PC-9 (cell line): ENCODE measurements at regions of chr3 and their contacts with region 1.

Region 1: DNA sequence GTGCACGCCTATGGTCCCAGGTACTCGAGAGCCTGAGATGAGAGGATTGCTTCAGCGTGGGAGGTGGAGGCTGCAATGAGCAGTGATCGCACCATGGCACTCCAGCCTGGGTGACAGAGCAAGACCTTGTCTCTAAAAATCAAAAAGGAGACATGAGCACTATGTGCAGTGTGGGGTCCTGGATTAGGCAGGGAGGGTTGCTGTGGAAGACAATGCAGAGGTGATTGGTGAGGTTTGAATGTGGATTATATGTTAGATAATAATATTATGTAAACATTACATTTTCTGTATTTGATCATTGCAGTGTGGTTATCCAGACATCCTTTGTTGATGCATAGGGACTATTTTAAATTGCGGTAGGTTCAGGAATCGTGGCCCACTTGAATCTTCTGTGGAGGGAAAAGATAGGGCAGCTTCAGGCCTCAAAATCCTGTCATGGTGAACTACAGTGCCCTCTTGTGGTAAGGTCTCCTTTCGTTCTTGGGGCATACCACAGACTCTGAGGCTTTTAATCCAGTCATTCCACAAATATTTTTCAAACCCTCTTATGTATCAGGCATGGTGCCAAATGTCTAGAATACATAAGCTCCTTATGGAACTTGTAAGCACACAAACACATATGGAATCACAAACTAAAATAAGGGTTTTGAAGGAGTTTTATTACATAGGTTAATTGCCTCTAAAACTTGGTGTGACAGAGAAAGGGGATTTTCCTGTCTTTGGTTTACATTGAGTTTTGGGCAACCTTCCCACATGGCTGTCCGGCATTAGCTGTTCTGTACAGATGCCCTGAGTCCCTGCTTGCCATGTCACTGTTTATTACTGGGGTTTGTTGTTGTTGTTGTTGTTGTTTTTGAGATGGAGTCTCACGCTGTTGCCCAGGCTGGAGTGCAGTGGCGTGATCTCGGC is 37.7 kb downstream of the GPD1L start:
- DNase-seq: peak; percentile 55 to 81
- H3K4me3 ChIP-seq: no peak overlapping the region
- H3K27ac ChIP-seq: no peak overlapping the region
- H3K4me1 ChIP-seq: peaks cover 25% of the 10 kb centered on the region
- H3K27me3 ChIP-seq: no peaks in the 10 kb centered on the region
- CTCF ChIP-seq: peak; percentile 70

Region 2: GRCh38 chr3:31610700-31611275 is 533.3 kb before region 1 on chr3:
- CTCF ChIA-PET with region 1: no interaction called
- POLR2A ChIA-PET with region 1: no interaction called
- intact Hi-C with region 1: loop called (anchors 10 kb)
- DNase-seq: peak in 1 of 2 experiments; percentile 37
- H3K4me3 ChIP-seq: no peak overlapping the region
- H3K27ac ChIP-seq: no peak overlapping the region
- H3K4me1 ChIP-seq: no peaks in the 10 kb centered on the region
- H3K27me3 ChIP-seq: no peaks in the 10 kb centered on the region
- CTCF ChIP-seq: peak; percentile 61

Region 3: DNA sequence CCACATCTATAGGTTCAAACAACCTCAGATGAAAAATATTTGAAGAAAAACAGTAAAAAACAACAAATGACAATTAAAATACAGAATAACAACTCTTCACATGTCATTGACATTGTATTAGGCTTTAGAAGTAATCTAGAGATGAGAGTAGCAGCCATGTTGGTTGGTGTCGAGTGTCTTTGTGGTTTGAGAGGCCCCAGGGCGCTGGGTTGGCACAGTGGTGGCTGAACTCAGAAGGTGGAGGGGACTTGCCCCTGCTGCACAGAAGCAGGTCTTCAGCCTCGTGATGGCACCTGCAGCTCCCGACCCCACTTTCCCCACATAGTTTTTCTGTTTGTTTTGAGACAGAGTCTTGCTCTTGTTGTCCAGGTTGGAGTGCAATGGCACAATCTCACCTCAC is 350.3 kb before region 1 on chr3:
- CTCF ChIA-PET with region 1: no interaction called
- POLR2A ChIA-PET with region 1: interaction called, 14 read pairs
- intact Hi-C with region 1: no loop called
- DNase-seq: no peak
- H3K4me3 ChIP-seq: no peak overlapping the region
- H3K27ac ChIP-seq: no peak overlapping the region
- H3K4me1 ChIP-seq: no peaks in the 10 kb centered on the region
- H3K27me3 ChIP-seq: no peaks in the 10 kb centered on the region
- CTCF ChIP-seq: no peak

Region 4: GRCh38 chr3:31858439-31858838 is 285.7 kb before region 1 on chr3:
- CTCF ChIA-PET with region 1: no interaction called
- POLR2A ChIA-PET with region 1: interaction called, 3 read pairs
- intact Hi-C with region 1: loop called (anchors 5 kb)
- DNase-seq: peak in 1 of 2 experiments; percentile 6
- H3K4me3 ChIP-seq: no peak overlapping the region
- H3K27ac ChIP-seq: no peak overlapping the region
- H3K4me1 ChIP-seq: no peaks in the 10 kb centered on the region
- H3K27me3 ChIP-seq: no peaks in the 10 kb centered on the region
- CTCF ChIP-seq: no peak

Region 5: DNA sequence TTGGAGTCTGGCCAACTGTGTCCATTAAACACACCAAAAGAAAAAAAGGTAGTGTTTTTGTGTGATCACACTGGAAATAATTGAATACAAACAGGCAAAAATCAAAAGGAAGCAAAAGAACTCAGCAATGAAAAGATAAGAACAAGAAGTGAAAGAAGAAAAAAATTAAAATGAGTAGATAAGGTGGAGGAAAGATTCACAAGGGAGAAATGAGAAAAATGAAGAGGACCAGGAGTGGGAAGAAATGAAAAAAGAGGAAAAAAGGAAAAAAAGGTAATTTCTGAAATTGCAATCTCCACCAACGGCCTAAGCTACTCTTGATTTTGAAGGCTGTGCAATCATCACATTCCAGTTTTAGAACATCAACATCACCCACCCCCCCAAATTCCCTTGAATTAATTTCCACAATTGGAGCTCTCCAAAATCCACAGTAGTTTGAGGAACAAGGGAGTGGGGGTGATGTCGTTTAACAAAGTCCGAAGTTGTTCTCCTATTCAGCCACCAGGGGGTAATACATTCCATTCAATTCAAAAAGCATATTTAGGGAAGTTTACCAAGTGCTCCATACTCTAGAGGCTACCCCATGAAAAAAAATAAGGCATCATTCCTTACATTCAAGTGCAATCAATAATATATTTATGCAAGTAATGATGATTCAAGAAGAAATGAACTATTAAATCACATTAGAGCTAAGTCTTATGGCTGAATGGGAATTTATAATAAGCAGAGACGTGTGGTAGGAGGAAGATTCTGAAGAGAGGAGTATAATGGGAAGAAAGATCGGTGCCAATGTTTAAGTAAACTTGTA is 125.1 kb before region 1 on chr3:
- CTCF ChIA-PET with region 1: interaction called, 18 read pairs
- POLR2A ChIA-PET with region 1: no interaction called
- intact Hi-C with region 1: loop called (anchors 2 kb)
- DNase-seq: peak in 1 of 2 experiments; percentile 39
- H3K4me3 ChIP-seq: no peak overlapping the region
- H3K27ac ChIP-seq: no peak overlapping the region
- H3K4me1 ChIP-seq: no peaks in the 10 kb centered on the region
- H3K27me3 ChIP-seq: no peaks in the 10 kb centered on the region
- CTCF ChIP-seq: peak; percentile 75

Region 6: DNA sequence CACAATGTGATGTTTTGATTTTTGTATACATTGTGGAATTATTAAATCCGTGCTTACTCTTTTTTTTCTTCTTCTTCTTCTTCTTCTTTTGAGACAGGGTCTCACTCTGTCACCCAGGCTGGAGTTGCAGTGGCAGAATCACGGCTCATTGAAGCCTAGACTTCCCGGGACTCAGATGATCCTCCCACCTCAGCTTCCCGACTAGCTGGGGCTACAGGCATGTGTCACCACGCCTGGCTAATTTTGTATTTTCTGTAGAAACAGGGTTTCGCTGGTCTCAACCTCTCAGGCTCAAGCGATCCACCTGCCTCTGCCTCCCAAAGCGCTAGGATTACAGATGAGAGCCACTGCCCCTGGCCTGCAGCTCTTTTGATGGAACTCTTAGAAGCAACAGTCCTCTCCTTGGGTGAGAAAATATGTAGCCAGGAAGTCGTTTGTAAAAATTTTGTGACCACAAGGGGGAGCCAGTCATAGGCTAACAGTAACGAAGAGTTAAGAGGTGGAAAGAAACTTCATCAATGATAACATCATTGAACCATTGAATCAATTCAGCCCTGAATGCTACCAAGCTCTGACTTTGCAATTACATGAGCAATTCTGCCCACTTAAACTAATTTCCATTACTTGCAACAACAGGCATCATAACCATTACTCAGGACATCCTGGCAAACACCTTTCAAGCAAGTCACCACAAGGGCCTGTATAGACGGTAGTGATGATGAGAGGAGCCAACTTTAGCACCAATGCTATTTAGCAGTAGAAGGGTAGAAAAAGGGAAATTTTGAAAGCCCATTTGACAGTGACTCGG is 230.9 kb after region 1 on chr3:
- CTCF ChIA-PET with region 1: no interaction called
- POLR2A ChIA-PET with region 1: no interaction called
- intact Hi-C with region 1: no loop called
- DNase-seq: peak in 1 of 2 experiments; percentile 44
- H3K4me3 ChIP-seq: no peak overlapping the region
- H3K27ac ChIP-seq: no peak overlapping the region
- H3K4me1 ChIP-seq: no peaks in the 10 kb centered on the region
- H3K27me3 ChIP-seq: no peaks in the 10 kb centered on the region
- CTCF ChIP-seq: peak; percentile 67